Head of caudate nucleus (tissue), 42 donors: ENCODE measurements at regions of chr11 and their contacts with region 1.

Region 1: DNA sequence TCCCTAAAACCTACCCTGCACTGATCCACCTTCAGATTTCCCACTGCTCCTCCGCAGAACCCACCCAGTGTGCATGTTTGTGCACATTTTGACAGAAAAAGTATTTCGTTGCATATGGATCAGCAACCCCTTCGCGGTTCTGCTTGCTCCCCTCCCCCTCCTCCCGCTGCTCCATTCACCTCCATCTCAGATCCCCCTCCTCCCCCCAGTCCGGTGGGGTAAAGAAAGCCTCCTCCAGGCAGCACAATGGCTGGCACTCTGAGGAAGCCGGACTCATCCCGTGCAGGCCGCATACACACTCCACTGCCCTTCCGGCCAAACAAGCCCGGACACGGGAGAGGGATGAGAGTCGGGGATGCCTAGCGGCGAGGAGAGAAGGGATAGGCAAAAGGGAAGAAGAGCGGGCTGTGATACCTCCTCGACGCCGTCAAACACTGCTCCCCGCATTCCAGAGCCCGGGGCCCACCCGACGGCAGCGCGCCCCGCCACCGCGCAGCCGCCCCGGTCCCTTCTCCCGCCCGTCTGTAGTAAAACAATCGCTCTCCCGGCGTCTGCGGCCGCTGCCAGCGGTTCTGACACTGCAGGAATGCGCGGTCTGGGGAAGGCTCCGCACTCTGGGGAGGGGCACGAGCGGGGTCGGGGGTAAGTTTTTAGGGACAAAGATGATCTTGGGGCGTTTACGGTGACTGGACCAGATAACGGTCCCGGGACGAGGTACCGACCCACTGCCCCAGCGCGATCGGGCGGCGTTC is 915 bp downstream of the FEZ1 start:
- DNase-seq: peak; percentile 14 to 87 (median 69)

Region 2: DNA sequence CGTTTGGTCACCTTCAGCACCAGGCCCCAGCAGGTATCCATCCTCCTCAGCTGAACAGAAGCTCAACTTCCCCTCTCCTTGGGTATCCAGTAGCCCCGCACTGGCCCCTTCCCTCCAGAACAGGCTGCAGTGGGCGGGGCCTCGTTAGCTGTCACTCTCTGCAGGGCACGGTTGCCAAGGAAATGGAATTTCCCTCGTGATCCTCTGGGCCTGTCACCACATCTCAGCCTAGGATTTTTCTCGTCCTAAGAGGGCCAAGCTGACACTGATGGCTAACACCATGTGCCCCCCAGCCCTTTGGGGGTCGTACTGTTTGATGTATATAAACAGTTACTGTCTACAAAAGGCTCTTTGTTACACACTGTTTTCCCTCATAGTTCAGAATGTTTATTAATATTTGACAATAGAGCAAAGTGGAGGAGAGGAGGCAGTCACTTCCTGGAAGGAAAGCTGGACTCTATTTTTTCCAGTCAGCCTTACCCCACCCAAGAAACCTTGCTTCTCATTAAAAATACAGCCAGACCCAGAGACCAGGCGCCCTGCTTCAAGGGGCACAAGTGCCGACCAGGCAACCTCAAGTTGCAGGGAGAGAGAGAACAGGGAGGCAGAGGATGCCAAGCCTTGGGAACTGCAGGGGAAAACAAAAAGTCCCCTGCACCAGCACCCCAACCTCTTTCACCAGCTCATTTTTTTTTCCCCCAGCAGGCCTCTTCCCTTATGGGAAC is 43.6 kb before region 1 on chr11:
- intact Hi-C with region 1: loop called (anchors 5 kb)
- DNase-seq: peak; percentile 88 to 97 (median 94)

Region 3: DNA sequence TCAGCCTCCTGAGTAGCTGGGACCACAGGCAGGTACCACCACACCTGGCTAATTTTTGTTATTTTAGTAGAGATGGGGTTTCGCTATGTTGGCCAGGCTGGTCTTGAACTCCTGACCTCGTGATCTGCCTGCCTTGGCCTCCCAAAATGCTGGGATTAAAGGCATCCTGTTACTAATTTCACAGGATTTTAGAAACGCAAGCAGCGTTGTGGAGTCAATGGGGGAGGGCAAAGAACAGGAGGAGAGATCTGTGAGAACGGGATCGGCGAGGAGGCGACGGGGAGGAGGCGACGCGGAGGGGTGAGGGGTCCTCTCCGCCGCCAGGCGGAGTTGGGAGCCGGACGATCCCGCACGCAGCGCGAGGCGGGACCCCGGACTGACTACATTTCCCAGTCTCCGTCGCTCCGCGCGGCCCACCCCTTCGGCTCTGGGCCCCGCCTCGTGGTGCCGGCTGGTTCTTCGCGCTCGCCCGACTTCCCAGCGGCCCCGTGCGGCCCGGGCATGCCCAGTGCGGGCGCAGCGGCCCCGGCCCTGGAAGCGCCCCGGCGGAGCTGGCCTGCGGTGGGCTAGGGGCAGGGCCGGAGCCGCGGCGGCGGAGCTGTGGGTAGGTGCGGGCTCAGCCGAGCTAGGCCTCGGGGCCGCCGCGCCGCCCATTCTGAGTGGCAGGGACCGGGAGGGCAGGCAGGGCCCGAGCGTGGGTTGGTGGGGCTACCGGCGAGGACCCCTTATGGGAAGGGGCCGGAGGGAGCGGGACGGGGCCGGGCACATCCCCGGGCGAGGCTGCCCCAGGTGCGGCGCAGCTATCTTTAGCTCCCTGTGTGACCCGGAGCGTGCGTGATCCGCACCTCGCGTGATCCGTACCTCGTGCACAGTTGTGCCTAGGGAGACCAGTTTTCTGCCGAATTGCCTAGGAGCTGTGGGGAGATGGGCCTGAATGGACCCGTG is 74.1 kb after region 1 on chr11 and contains the start of gene EI24:
- intact Hi-C with region 1: loop called (anchors 5 kb)
- DNase-seq: peak; percentile 79 to 97 (median 94)

Region 4: GRCh38 chr11:125592305-125593112 is 97.4 kb after region 1 on chr11 and contains the start of gene STT3A:
- intact Hi-C with region 1: loop called (anchors 10 kb)
- DNase-seq: peak; percentile 96 to 100 (median 100)